ENCODE measurements at regions of chr1 and their contacts with region 1.

Region 1: DNA sequence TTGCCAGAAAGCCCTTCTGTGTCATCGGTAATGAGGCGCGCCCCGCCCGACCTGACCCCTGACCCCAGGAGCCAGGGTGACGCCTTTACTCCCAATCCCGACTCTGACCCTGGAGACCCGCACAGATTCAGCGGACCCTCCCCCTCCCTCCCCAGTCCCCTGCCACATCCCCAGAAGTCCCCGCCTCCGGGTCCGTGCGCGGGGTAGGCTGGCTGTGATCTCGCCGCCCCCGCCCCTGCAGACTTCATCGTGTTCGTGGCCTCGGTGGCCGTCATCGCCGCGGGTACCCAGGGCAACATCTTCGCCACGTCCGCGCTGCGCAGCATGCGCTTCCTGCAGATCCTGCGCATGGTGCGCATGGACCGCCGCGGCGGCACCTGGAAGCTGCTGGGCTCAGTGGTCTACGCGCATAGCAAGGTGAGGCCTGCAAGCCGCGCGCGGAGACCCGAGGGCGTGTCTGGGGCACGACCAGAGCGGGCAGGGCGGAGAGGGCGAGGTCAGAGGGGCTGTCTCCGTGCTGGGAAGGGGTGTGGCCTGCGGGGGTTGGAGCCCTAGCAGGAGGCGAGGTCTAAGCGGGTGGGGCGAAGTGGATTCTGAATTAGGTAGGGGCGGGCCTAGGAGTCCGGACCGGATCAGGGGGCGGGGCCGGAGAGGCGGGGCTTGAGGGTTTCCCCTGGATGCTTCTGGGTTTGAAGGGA is 34.8 kb downstream of the KCNQ4 start:
- DNase-seq: peak; percentile 68
- ATAC-seq: peak; percentile 99
- H3K4me3 Mint-ChIP-seq: peak overlapping the region; percentile 85
- H3K27ac Mint-ChIP-seq: peak overlapping the region; percentile 66
- H3K4me1 Mint-ChIP-seq: peaks cover 13% of the 10 kb centered on the region
- H3K27me3 Mint-ChIP-seq: no peaks in the 10 kb centered on the region
- CTCF ChIP-seq: no peak

Region 2: GRCh38 chr1:39901698-39902459 is 916.5 kb before region 1 on chr1 and contains the start of gene MYCL:
- CTCF ChIA-PET with region 1: no interaction called
- POLR2A ChIA-PET with region 1: no interaction called
- intact Hi-C with region 1: no loop called
- DNase-seq: peak; percentile 63
- ATAC-seq: peak; percentile 81
- H3K4me3 Mint-ChIP-seq: peak within 1 kb of the TSS; percentile 75
- H3K27ac Mint-ChIP-seq: no peak within 1 kb of the TSS
- H3K4me1 Mint-ChIP-seq: peaks cover 6% of the 10 kb centered on the region
- H3K27me3 Mint-ChIP-seq: peaks cover 42% of the 10 kb centered on the region
- CTCF ChIP-seq: peak; percentile 46
- total RNA-seq, gene MYCL: 0.10 and 0.29 TPM in 2 replicates

Region 3: DNA sequence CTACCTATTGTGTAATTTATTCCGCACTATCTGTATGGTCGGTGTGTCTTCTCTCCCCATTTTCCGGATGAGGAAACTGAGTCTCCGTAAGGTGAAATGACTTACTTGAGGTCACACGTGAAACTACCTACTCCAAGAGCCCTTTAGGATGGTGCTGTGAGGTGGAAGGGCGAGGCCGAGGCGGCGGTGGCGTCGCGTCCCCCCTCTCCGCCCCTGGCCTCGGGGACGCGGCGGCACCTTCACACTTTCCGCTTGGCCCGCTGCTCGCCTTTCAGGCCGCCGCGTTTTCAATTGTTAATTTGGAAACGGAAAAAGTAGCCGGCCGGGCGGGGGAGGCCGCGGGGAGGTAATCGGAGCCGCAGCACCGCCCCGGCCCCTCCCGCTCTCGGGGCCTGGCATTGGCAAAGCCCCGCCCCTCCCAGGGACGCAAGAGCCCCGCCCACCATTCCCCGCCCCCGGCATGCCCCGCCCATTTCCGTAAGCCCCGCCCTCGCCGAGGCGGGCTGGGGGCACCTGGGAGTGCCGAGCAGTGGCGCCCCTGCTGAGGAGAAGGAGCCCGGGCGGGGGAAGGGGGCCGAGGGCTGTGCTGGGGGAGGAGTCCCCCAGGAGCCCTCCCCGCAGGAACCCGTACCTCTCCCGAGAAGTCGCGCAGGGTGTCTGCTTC is 16.2 kb before region 1 on chr1:
- CTCF ChIA-PET with region 1: no interaction called
- POLR2A ChIA-PET with region 1: interaction called, 5 read pairs
- intact Hi-C with region 1: loop called (anchors 1 kb)
- DNase-seq: peak; percentile 75
- ATAC-seq: peak; percentile 96
- H3K4me3 Mint-ChIP-seq: peak overlapping the region; percentile 77
- H3K27ac Mint-ChIP-seq: peak overlapping the region; percentile 68
- H3K4me1 Mint-ChIP-seq: peaks cover 33% of the 10 kb centered on the region
- H3K27me3 Mint-ChIP-seq: no peaks in the 10 kb centered on the region
- CTCF ChIP-seq: no peak